ENCODE measurements at regions of chr19 and their contacts with region 1.

Region 1: GRCh38 chr19:39390755-39391592 is at the starts of genes MED29 and PAF1:
- DNase-seq: peak; percentile 100
- ATAC-seq: peak; percentile 96
- H3K4me3 ChIP-seq: peak within 1 kb of the TSS; percentile 39 to 51
- H3K27ac ChIP-seq: peak within 1 kb of the TSS; percentile 86
- H3K4me1 ChIP-seq: peaks cover 24% of the 10 kb centered on the region
- H3K27me3 ChIP-seq: no peaks in the 10 kb centered on the region
- CTCF ChIP-seq: no peak
- total RNA-seq, gene MED29: 739 TPM
- total RNA-seq, gene PAF1: 901 TPM

Region 2: GRCh38 chr19:39351537-39352064 is 39.4 kb before region 1 on chr19:
- CTCF ChIA-PET with region 1: interaction called, 14 read pairs
- POLR2A ChIA-PET with region 1: interaction called, 26 read pairs
- in situ Hi-C with region 1: loop called (anchors 5 kb)
- intact Hi-C with region 1: no loop called
- DNase-seq: no peak
- ATAC-seq: peak; percentile 6
- H3K4me3 ChIP-seq: no peak overlapping the region
- H3K27ac ChIP-seq: no peak overlapping the region
- H3K4me1 ChIP-seq: no peaks in the 10 kb centered on the region
- H3K27me3 ChIP-seq: no peaks in the 10 kb centered on the region
- CTCF ChIP-seq: no peak

Region 3: GRCh38 chr19:39406656-39407393 is 15.9 kb after region 1 on chr19 and contains the start of gene ZFP36:
- CTCF ChIA-PET with region 1: interaction called, 280 read pairs
- POLR2A ChIA-PET with region 1: interaction called, 145 read pairs
- in situ Hi-C with region 1: no loop called
- intact Hi-C with region 1: loop called (anchors 1 kb)
- DNase-seq: peak; percentile 100
- ATAC-seq: peak; percentile 37
- H3K4me3 ChIP-seq: peak within 1 kb of the TSS; percentile 42 to 55
- H3K27ac ChIP-seq: peak within 1 kb of the TSS; percentile 92
- H3K4me1 ChIP-seq: peaks cover 76% of the 10 kb centered on the region
- H3K27me3 ChIP-seq: no peaks in the 10 kb centered on the region
- CTCF ChIP-seq: no peak
- total RNA-seq, gene ZFP36: 414 TPM

Region 4: DNA sequence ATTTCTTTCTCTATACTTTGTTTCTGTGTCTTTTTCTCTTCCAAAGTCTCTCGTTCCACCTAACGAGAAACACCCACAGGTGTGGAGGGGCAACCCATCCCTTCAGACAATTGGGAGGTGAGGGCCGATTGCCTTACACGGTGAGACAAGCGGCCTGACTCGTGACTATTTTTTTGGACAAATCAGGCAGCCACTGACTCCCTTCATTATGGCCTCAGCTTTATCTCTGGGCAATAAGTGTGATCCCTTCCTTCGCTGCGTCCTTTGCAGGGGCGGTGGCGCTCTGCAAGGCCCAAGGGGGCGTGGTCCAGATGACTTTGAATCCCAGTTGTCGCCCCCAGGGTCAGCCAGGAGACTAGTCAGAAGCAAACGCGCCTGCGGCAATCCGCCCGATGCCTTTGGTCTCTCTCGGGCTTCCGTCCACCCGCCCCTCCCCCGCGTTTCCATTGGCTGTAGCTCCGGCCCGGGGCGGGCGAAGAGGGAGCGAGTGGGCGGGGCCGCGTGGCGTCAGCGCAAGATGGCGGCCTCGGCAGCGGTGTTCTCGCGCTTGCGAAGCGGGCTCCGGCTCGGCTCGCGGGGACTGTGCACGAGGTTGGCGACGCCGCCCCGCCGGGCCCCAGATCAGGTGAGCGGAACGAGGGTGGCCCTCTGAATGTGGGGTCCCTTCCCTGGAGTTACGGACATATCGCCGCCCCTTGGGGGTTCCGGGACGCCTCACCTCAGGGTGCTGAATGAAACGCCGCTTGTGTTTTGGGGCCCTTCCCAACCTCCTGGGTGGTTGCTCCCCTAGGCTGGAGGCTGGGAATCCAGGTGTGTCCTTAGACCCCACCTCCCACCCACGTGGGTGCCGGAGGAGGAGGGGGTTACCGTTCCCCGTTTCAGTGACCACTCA is 89.6 kb after region 1 on chr19 and contains the start of gene TIMM50:
- CTCF ChIA-PET with region 1: no interaction called
- POLR2A ChIA-PET with region 1: interaction called, 10 read pairs
- in situ Hi-C with region 1: no loop called
- intact Hi-C with region 1: no loop called
- DNase-seq: peak; percentile 100
- ATAC-seq: peak; percentile 96
- H3K4me3 ChIP-seq: peak within 1 kb of the TSS; percentile 39 to 55
- H3K27ac ChIP-seq: peak within 1 kb of the TSS; percentile 86
- H3K4me1 ChIP-seq: peaks cover 23% of the 10 kb centered on the region
- H3K27me3 ChIP-seq: no peaks in the 10 kb centered on the region
- CTCF ChIP-seq: no peak
- total RNA-seq, gene TIMM50: 1,837 TPM

Region 5: GRCh38 chr19:39563408-39563807 is 172.4 kb after region 1 on chr19:
- CTCF ChIA-PET with region 1: no interaction called
- POLR2A ChIA-PET with region 1: no interaction called
- in situ Hi-C with region 1: loop called (anchors 5 kb)
- intact Hi-C with region 1: no loop called
- DNase-seq: peak; percentile 81
- ATAC-seq: peak; percentile 10
- H3K4me3 ChIP-seq: no peak overlapping the region
- H3K27ac ChIP-seq: no peak overlapping the region
- H3K4me1 ChIP-seq: peaks cover 3% of the 10 kb centered on the region
- H3K27me3 ChIP-seq: peaks cover 74% of the 10 kb centered on the region
- CTCF ChIP-seq: no peak

Measured in Panc1 (cell line).